Posterior cingulate gyrus (tissue), 11 donors: ENCODE measurements at regions of chrX and their contacts with region 1.

Region 1: DNA sequence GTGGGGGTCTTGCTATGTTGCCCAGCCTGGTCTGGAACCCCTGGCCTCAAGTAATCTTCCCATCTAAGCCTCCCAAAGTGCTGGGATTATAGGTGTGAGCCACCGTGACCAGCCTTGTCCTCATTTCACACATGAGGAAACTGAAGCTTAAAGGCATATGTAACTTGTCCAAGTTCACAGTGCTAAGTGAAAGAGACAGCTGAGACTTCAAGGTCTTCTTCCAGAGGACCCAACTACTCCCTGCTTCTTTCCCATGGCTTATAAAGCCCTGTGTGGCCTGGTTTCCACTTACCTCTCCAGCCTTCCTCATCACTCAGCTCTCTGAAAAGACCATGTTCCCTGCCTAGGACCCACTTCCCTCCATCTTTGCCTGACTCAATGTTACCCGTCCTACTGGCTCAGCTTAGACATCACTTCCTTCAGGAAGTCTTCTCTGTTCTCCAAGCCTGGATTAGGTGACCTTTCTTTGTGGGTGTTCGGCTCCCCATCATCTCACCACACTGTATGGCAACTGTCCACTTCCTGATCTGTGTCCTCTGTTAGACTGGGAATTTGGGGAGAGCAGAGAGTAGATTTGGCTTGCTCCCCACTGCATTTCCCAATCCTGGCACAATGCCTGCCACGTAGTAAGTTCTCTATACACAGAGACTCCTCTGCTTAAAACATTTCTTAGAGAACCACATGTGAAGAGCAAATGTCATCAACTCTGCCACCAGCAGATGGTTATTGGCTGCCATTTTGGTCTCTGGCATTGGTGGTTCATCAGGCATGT is 30.4 kb upstream of the LAMP2 start:
- DNase-seq: no peak

Region 2: GRCh38 chrX:120477453-120477852 is 22.0 kb before region 1 on chrX:
- intact Hi-C with region 1: no loop called
- DNase-seq: no peak

Region 3: GRCh38 chrX:120664081-120664480 is 164.6 kb after region 1 on chrX:
- intact Hi-C with region 1: loop called (anchors 5 kb)
- DNase-seq: no peak

Region 4: DNA sequence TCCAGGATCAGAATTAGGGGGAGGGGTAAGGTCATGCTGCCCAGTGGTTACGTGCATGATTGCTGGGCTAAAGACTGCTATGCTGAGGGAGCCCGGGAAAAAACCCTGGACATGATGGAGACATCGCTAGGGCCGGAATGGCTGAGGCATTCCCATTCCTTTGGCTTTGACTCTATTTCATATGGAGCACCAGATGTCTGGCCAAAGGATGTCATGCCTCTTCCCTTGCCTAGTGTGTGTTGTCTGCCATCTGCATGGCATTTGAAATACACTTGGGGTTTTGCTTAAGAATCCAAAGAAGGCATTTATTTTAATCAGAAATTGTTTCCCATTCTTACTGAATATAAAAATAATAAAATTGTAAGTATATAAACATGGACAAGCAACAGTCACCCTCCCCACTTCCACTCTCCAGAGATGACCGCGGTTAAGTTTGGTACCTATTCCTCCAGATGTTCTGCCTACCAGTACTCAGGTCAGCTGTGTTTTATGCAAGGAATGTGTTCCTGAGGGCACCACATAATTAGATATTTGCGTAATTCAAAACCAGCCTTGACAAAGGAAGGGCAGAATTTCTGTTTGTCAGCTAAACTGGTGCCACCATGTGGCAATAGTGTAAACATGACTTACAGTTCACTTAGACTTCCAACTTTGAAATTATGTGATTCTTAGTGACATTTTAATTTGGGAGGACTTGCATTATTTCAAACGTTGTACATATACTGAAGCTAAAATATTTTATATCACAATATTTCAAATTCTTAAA is 270.3 kb after region 1 on chrX:
- intact Hi-C with region 1: loop called (anchors 2 kb)
- DNase-seq: no peak